Sigmoid colon (tissue), 7 donors: ENCODE measurements at regions of chr11 and their contacts with region 1.

Region 1: DNA sequence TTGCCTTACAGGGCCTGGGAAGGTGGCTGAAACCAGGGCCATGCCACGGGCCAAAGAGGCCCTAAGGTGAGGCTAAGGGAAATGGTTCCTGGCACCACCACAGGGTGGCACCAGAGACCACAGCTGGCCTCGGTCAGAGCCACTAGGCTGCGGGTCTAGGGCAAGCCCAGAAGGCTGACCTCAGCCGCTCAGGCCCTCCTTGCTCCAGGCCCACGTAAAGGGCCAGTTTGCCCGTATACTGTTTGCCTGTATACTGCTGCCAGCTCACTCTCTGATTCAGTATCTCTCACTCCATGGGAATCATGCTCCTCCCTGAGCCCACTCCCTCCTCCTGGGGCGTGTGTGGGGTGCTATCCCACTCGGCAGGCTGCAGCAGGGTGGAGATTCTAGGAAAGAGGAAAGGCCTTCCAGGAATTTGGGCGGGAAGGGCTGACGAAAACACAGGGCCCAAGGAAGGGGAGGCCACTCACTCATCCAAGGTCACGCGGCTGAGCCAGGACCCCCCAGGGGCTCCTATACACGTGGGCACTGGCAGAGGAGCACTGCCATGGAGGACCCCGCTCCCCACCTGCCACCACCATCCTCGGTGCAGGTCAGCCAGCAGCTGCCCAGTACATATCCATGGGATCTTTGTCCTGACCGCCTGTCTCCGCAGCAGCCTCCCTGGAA is 62.4 kb downstream of the NECTIN1 start:
- DNase-seq: peak; percentile 82
- H3K4me3 ChIP-seq: no peak overlapping the region
- H3K27ac ChIP-seq: no peak overlapping the region
- H3K4me1 ChIP-seq: peaks cover 0 to 10% (median 8%) of the 10 kb centered on the region in 4 donors
- H3K27me3 ChIP-seq: no peaks in the 10 kb centered on the region
- CTCF ChIP-seq: peak; percentile 88 to 94 (median 93)
- EP300 ChIP-seq: no peak
- POLR2A ChIP-seq: no peak

Region 2: GRCh38 chr11:119741369-119742262 is 75.0 kb after region 1 on chr11:
- intact Hi-C with region 1: loop called (anchors 2 kb)
- DNase-seq: no peak
- H3K4me3 ChIP-seq: peak overlapping the region in 2 of 4 donors; percentile 25 to 27
- H3K27ac ChIP-seq: no peak overlapping the region
- H3K4me1 ChIP-seq: peaks cover 0 to 18% (median 11%) of the 10 kb centered on the region in 4 donors
- H3K27me3 ChIP-seq: peaks cover 15 to 68% (median 44%) of the 10 kb centered on the region in 3 donors
- CTCF ChIP-seq: peak in 3 of 4 experiments; percentile 13 to 63 (median 61)
- EP300 ChIP-seq: no peak
- POLR2A ChIP-seq: no peak

Region 3: DNA sequence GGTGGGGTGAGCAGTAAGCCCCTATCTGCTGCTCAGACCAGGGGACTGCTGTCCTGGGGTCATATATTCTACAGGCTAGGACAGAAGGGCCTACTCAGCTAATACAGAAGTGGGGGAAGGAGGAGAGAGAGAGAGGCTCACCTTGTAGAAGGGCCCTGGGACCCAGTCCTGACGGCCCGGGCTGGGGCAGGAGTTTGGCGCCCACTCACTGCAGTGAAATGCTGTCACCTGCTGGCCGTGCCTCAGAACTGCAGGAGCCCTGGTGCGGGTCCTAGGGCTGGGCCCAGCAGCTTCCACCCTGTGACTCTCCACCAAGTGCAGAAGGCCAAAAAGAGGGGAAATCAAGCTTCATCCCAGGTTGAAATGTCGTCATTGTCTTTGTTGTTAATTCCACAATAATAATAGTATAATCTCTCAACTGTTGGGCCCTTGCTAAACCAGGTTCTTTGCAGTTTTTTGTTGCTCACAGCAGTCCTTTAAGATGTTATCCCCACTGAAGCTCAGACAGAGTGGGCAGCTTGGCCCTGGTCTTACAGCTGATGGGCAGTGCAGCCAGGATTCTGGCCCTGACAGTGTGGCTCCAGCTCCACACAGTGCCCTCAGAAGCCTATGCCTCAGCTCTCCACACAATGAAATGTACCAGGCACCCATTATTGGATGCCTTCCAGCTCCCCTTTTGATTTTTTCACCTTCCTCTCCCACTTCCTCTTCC is 441.7 kb after region 1 on chr11:
- intact Hi-C with region 1: loop called (anchors 1 kb)
- DNase-seq: peak; percentile 77
- H3K4me3 ChIP-seq: no peak overlapping the region
- H3K27ac ChIP-seq: no peak overlapping the region
- H3K4me1 ChIP-seq: no peaks in the 10 kb centered on the region
- H3K27me3 ChIP-seq: peaks cover 0 to 10% (median 0%) of the 10 kb centered on the region in 3 donors
- CTCF ChIP-seq: peak; percentile 85 to 100 (median 98)
- EP300 ChIP-seq: no peak
- POLR2A ChIP-seq: no peak